Breast epithelium (tissue), 4 donors: ENCODE measurements at regions of chr14 and their contacts with region 1.

Region 1: DNA sequence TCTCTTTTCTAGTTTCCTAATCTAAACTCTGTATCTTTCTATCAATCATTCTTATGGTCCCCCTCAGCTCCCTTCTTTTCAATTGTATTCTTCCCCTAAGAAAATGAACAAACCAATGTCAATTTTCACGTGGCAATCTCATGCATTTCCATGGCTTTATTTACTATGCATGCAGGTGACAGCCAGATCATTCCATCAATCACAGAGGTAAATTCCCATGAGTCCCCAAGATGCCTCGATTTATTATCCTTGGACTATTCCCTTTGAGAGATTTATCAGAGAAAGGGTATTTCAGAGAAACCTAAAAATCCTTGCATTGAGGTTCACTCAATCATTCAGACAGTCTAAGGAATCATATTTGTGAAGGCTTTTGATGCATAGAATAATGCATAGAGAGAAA is 301.2 kb downstream of the DIO2 start:
- DNase-seq: no peak
- H3K4me3 ChIP-seq: no peak overlapping the region
- H3K27ac ChIP-seq: no peak overlapping the region
- H3K4me1 ChIP-seq: no peaks in the 10 kb centered on the region
- H3K27me3 ChIP-seq: no peaks in the 10 kb centered on the region
- CTCF ChIP-seq: no peak
- POLR2A ChIP-seq: no peak

Region 2: DNA sequence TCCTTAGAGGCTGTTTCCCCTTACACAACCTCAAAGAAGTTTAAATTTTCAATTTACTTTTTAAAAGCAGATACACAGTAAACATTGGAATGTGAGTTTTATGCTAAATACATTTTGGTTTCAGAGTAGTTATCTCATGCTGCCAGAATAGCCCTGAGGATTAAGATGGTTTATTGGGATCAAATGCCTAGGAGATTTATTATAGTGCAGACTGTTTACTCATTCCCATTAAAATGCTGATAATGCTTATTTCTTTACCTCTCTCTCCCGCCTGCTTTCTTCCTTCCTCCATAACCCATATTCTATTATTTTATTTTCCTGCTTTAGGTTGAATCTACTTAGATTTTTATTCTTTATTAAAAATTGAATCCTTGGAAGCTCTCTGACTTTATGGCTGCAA is 39.0 kb before region 1 on chr14:
- intact Hi-C with region 1: no loop called
- DNase-seq: no peak
- H3K4me3 ChIP-seq: no peak overlapping the region
- H3K27ac ChIP-seq: no peak overlapping the region
- H3K4me1 ChIP-seq: no peaks in the 10 kb centered on the region
- H3K27me3 ChIP-seq: no peaks in the 10 kb centered on the region
- CTCF ChIP-seq: no peak
- POLR2A ChIP-seq: no peak

Region 3: GRCh38 chr14:79896009-79896408 is 14.1 kb before region 1 on chr14:
- intact Hi-C with region 1: loop called (anchors 1 kb)
- DNase-seq: no peak
- H3K4me3 ChIP-seq: no peak overlapping the region
- H3K27ac ChIP-seq: no peak overlapping the region
- H3K4me1 ChIP-seq: no peaks in the 10 kb centered on the region
- H3K27me3 ChIP-seq: no peaks in the 10 kb centered on the region
- CTCF ChIP-seq: no peak
- POLR2A ChIP-seq: no peak

Region 4: GRCh38 chr14:80629606-80630005 is 719.5 kb after region 1 on chr14:
- intact Hi-C with region 1: no loop called
- DNase-seq: no peak
- H3K4me3 ChIP-seq: no peak overlapping the region
- H3K27ac ChIP-seq: no peak overlapping the region
- H3K4me1 ChIP-seq: no peaks in the 10 kb centered on the region
- H3K27me3 ChIP-seq: no peaks in the 10 kb centered on the region
- CTCF ChIP-seq: no peak
- POLR2A ChIP-seq: no peak